Endothelial cell of umbilical vein (primary cell): ENCODE measurements at regions of chr7 and their contacts with region 1.

Region 1: DNA sequence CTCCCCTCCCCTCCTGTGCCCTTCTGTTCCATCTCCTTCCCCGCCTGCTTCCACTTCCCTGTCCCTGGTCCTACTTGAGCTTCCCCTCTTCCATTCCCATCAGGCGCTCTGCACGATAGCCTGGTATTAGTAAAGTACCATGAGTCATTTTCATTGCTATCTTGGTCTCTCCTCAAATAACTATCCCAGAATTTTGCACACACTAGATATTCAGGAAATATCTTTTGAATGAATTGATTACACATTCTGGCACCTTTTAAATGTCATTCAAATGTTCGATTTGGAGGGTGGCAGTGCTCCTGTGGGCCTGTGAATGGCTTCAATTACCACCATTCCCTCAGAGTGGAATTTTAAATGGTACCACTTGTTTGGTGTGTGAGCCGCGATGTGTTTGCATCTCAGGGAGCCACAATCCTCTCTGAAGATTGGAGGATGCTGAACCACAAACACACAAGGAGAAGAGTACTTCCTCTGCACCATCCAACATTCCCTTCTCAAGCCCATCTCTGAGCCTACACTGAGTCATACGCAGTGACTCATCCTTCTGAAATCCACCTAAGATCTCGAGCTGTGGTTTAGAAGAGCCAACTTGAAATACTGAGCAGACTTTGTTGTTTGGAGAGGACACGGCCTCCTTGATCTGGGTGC is 81.7 kb downstream of the BMPER start:
- DNase-seq: peak; percentile 73
- H3K4me3 ChIP-seq: no peak overlapping the region
- H3K27ac ChIP-seq: peak overlapping the region; percentile 24
- H3K4me1 ChIP-seq: peaks cover 12% of the 10 kb centered on the region
- H3K27me3 ChIP-seq: no peaks in the 10 kb centered on the region
- CTCF ChIP-seq: no peak
- POLR2A ChIP-seq: no peak

Region 2: GRCh38 chr7:33789871-33790630 is 197.0 kb before region 1 on chr7:
- CTCF ChIA-PET with region 1: no interaction called
- POLR2A ChIA-PET with region 1: no interaction called
- dilution Hi-C with region 1: no loop called
- intact Hi-C with region 1: no loop called
- DNase-seq: peak; percentile 84
- H3K4me3 ChIP-seq: no peak overlapping the region
- H3K27ac ChIP-seq: peak overlapping the region; percentile 40
- H3K4me1 ChIP-seq: peaks cover 7% of the 10 kb centered on the region
- H3K27me3 ChIP-seq: no peaks in the 10 kb centered on the region
- CTCF ChIP-seq: no peak
- POLR2A ChIP-seq: no peak

Region 3: DNA sequence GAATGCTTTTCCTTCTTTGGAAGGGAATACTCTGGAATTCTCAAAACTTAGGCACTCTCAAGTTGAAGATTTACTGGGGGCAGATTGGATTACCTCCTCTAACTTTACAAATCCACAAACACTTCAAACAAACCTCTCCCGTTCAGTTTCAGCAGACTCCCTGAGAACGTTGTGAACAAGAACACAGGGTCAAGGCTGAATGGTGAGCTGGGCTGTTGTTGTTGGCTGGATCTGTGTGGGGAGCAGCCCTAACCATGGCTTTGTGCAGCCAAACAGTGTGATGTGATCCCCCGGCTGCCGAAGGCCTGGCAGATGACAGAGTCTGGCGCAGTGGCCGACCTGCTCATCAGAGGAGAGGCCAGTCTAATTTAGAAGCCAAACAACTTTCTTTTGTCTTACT is 11.4 kb after region 1 on chr7:
- CTCF ChIA-PET with region 1: interaction called, 10 read pairs
- POLR2A ChIA-PET with region 1: no interaction called
- dilution Hi-C with region 1: no loop called
- intact Hi-C with region 1: no loop called
- DNase-seq: no peak
- H3K4me3 ChIP-seq: no peak overlapping the region
- H3K27ac ChIP-seq: no peak overlapping the region
- H3K4me1 ChIP-seq: no peaks in the 10 kb centered on the region
- H3K27me3 ChIP-seq: no peaks in the 10 kb centered on the region
- CTCF ChIP-seq: no peak
- POLR2A ChIP-seq: no peak

Region 4: GRCh38 chr7:34011696-34012095 is 24.6 kb after region 1 on chr7:
- CTCF ChIA-PET with region 1: interaction called, 10 read pairs
- POLR2A ChIA-PET with region 1: no interaction called
- dilution Hi-C with region 1: no loop called
- intact Hi-C with region 1: no loop called
- DNase-seq: no peak
- H3K4me3 ChIP-seq: no peak overlapping the region
- H3K27ac ChIP-seq: no peak overlapping the region
- H3K4me1 ChIP-seq: peaks cover 8% of the 10 kb centered on the region
- H3K27me3 ChIP-seq: no peaks in the 10 kb centered on the region
- CTCF ChIP-seq: no peak
- POLR2A ChIP-seq: no peak

Region 5: GRCh38 chr7:34036051-34036945 is 49.2 kb after region 1 on chr7:
- CTCF ChIA-PET with region 1: interaction called, 13 read pairs
- POLR2A ChIA-PET with region 1: no interaction called
- dilution Hi-C with region 1: no loop called
- intact Hi-C with region 1: no loop called
- DNase-seq: peak; percentile 94
- H3K4me3 ChIP-seq: no peak overlapping the region
- H3K27ac ChIP-seq: peak overlapping the region; percentile 58
- H3K4me1 ChIP-seq: peaks cover 18% of the 10 kb centered on the region
- H3K27me3 ChIP-seq: no peaks in the 10 kb centered on the region
- CTCF ChIP-seq: no peak
- POLR2A ChIP-seq: no peak

Region 6: GRCh38 chr7:34069630-34070270 is 82.7 kb after region 1 on chr7:
- CTCF ChIA-PET with region 1: interaction called, 22 read pairs
- POLR2A ChIA-PET with region 1: no interaction called
- dilution Hi-C with region 1: no loop called
- intact Hi-C with region 1: loop called (anchors 5 kb)
- DNase-seq: peak; percentile 62
- H3K4me3 ChIP-seq: no peak overlapping the region
- H3K27ac ChIP-seq: peak overlapping the region; percentile 41
- H3K4me1 ChIP-seq: peaks cover 22% of the 10 kb centered on the region
- H3K27me3 ChIP-seq: no peaks in the 10 kb centered on the region
- CTCF ChIP-seq: no peak
- POLR2A ChIP-seq: no peak

Region 7: DNA sequence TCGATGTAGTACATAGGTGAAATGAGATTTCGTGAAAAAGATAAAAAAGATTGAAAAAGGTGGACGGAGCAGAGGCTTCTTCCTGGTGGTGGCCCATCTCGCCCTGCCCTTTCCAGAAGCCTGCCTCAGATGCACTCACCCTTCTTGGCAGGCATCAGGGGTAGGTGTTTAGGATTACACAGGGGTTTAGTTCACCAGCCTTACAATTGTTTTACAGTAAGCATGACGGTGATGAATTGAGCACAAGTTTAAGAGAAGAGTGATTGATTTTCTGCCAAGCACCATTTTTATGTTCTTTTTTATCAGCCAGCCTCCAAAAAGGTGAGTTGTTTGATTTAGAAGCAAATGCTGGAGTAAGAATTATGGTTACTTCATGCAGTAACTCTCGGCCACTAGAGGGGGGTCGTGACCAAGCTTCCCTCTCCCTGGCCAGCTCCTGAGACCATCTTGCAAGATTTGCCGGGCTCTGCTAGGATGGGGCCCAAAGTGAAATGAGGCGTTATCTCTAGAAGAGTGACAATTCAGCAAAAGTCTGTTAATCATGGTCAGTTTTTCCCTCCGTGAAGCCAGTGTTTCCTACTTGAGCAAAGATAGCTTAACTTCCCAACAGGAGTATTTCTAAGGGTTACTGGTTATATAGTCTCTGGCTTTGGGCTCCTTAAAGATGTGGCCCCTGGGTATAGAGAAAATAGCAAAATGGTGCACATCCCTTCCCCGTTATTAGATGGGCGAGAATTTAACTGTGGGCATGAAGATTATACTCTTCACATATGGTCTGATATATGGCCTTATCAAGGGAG is 147.1 kb after region 1 on chr7:
- CTCF ChIA-PET with region 1: interaction called, 14 read pairs
- POLR2A ChIA-PET with region 1: interaction called, 3 read pairs
- dilution Hi-C with region 1: no loop called
- intact Hi-C with region 1: no loop called
- DNase-seq: peak; percentile 67
- H3K4me3 ChIP-seq: no peak overlapping the region
- H3K27ac ChIP-seq: no peak overlapping the region
- H3K4me1 ChIP-seq: no peaks in the 10 kb centered on the region
- H3K27me3 ChIP-seq: peaks cover 2 to 4% of the 10 kb centered on the region in 2 experiments
- CTCF ChIP-seq: peak; percentile 64 to 76
- POLR2A ChIP-seq: no peak

Region 8: GRCh38 chr7:34165929-34166550 is 179.0 kb after region 1 on chr7:
- CTCF ChIA-PET with region 1: interaction called, 4 read pairs
- POLR2A ChIA-PET with region 1: no interaction called
- dilution Hi-C with region 1: no loop called
- intact Hi-C with region 1: loop called (anchors 2 kb)
- DNase-seq: peak; percentile 37
- H3K4me3 ChIP-seq: no peak overlapping the region
- H3K27ac ChIP-seq: no peak overlapping the region
- H3K4me1 ChIP-seq: no peaks in the 10 kb centered on the region
- H3K27me3 ChIP-seq: peaks cover 0 to 2% of the 10 kb centered on the region in 2 experiments
- CTCF ChIP-seq: peak; percentile 37 to 59
- POLR2A ChIP-seq: no peak